ENCODE measurements at regions of chr21 and their contacts with region 1.

Region 1: GRCh38 chr21:33386222-33386784 is 16.9 kb upstream of the IFNGR2 start:
- DNase-seq: no peak
- H3K4me3 Mint-ChIP-seq: no peak overlapping the region
- H3K27ac Mint-ChIP-seq: no peak overlapping the region
- H3K4me1 Mint-ChIP-seq: peaks cover 20% of the 10 kb centered on the region
- H3K27me3 Mint-ChIP-seq: no peaks in the 10 kb centered on the region
- CTCF ChIP-seq: no peak

Region 2: GRCh38 chr21:33396947-33397346 is 10.6 kb after region 1 on chr21:
- CTCF ChIA-PET with region 1: no interaction called
- POLR2A ChIA-PET with region 1: interaction called, 71 read pairs
- intact Hi-C with region 1: loop called (anchors 1 kb)
- DNase-seq: peak; percentile 94
- H3K4me3 Mint-ChIP-seq: no peak overlapping the region
- H3K27ac Mint-ChIP-seq: peak overlapping the region; percentile 39
- H3K4me1 Mint-ChIP-seq: peaks cover 40% of the 10 kb centered on the region
- H3K27me3 Mint-ChIP-seq: no peaks in the 10 kb centered on the region
- CTCF ChIP-seq: no peak

Region 3: DNA sequence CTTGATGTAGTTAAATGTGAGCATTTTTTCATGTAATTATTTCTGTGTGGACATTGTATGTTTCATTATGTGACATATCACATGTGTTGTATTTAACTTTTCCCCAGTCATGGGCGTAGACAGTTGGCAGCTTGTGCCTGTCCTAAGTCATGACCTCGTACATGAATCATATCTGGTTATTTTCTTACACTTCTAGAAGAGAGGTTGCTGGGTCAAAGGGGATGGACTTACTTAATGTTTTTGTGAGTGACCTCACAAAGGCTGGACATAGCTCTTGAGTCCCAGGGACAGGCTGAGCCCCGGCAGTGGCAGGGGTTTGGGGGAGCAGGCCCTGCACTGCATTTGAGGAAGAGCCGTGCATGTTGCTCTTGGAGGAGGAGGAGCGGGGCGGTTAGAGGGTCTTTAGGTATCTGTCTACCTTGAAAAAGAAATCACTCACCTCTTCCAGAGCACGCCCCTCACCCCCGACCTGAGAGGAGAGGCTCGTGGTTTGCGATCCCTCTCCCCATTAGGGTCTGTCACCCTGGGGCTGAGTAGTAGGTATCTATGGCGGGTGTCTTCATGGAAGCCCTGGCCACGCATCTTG is 33.3 kb after region 1 on chr21:
- CTCF ChIA-PET with region 1: no interaction called
- POLR2A ChIA-PET with region 1: no interaction called
- intact Hi-C with region 1: no loop called
- DNase-seq: peak; percentile 56
- H3K4me3 Mint-ChIP-seq: no peak overlapping the region
- H3K27ac Mint-ChIP-seq: peak overlapping the region; percentile 78
- H3K4me1 Mint-ChIP-seq: peaks cover 21% of the 10 kb centered on the region
- H3K27me3 Mint-ChIP-seq: no peaks in the 10 kb centered on the region
- CTCF ChIP-seq: no peak

Measured in MCF 10A (cell line).